ENCODE measurements at regions of chr1 and their contacts with region 1.

Region 1: DNA sequence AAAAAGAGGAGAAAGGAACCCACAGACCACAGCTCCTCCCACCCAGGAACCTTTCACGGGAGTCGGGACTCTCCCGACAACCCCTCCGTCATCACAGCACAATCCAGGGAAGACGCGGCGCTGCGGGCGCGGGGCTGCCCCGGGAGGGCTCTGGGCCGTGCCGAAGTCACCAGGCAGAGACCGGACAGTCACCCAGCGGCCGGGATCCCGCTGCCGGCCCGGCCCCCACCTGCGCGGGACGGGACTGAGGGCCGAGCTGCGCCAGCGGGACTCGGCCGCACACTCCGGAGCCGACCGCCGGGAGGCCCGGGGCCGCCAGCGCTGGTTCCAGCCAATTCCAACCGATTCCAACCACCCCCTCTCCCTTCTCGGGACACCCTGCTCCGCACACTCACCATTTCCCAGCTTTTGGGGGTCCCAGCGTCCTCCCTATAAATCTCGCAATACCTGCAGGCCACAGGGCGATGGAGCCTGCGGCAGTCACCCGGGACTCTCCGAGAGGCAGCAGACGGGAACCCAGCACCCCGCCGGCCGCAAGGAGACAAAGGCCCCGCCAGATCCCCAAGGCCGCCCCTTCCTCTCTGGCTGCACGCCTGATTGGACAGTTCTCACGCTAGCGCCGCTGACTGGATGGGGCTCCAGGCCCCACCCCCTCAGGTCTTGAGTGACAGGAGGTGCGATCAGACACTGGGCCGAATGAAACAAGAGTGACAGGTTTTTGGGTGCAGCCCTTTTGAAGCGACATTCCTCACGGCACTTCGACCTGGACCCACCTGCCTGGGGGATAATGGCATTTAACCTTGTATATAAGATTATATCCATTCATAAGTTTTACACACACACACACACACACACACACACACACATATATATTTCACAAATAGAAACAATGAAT is at the start of gene ZNF695:
- DNase-seq: peak; percentile 100
- ATAC-seq: peak; percentile 99
- H3K4me3 ChIP-seq: peak within 1 kb of the TSS; percentile 96
- H3K27ac ChIP-seq: peak within 1 kb of the TSS; percentile 27
- H3K4me1 ChIP-seq: peaks cover 5% of the 10 kb centered on the region
- H3K27me3 ChIP-seq: no peaks in the 10 kb centered on the region
- CTCF ChIP-seq: no peak
- total RNA-seq, gene ZNF695: 14.7 and 15.8 TPM in 2 replicates

Region 2: DNA sequence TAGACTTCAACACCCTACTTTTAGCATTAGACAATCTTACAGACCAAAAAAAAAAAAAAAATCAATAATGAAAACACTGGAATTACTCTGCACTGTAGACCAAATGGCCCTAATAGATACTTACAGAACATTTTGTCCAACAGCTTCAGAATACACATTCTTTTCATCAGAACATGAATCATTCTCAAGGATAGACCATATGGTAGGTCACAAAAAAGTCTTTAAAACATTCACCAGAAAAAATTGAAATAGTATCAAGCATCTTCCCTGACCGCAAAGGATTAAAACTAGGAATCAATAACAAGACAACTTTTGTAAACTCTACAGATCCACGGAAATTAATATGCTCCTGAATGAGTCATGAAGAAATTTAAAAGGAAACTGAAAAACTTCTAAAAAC is 48.3 kb after region 1 on chr1:
- CTCF ChIA-PET with region 1: no interaction called
- POLR2A ChIA-PET with region 1: no interaction called
- intact Hi-C with region 1: no loop called
- DNase-seq: no peak
- ATAC-seq: no peak
- H3K4me3 ChIP-seq: no peak overlapping the region
- H3K27ac ChIP-seq: no peak overlapping the region
- H3K4me1 ChIP-seq: no peaks in the 10 kb centered on the region
- H3K27me3 ChIP-seq: no peaks in the 10 kb centered on the region
- CTCF ChIP-seq: no peak

Region 3: GRCh38 chr1:247078261-247079140 is 70.7 kb after region 1 on chr1 and contains the start of gene ZNF670:
- CTCF ChIA-PET with region 1: no interaction called
- POLR2A ChIA-PET with region 1: no interaction called
- intact Hi-C with region 1: loop called (anchors 1 kb)
- DNase-seq: peak; percentile 99
- ATAC-seq: peak; percentile 99
- H3K4me3 ChIP-seq: peak within 1 kb of the TSS; percentile 85
- H3K27ac ChIP-seq: peak within 1 kb of the TSS; percentile 19; the same call in 1 of the 2 replicates
- H3K4me1 ChIP-seq: peaks cover 7% of the 10 kb centered on the region
- H3K27me3 ChIP-seq: no peaks in the 10 kb centered on the region
- CTCF ChIP-seq: peak; percentile 43; the same call in 1 of the 2 replicates
- total RNA-seq, gene ZNF670: 5.6 and 5.9 TPM in 2 replicates